Activated T-helper 1 cell treated with anti-CD3 and anti-CD28 coated beads, Interleukin-12 subunit alpha, Interleukin-12 subunit beta, Interleukin-2, Interleukin-4 antibody, amounts not matched to agents 30 ng/mL and 10 ng/mL and 1 ng/mL, durations not matched to agents 14 hours and 24 hours and 36 hours (primary cell): ENCODE measurements at regions of chr10 and their contacts with region 1.

Region 1: GRCh38 chr10:123582084-123582989 is 83.8 kb upstream of the GPR26 start:
- DNase-seq: peak; percentile 46
- H3K4me3 Mint-ChIP-seq: no peak overlapping the region
- H3K27ac Mint-ChIP-seq: no peak overlapping the region
- H3K4me1 Mint-ChIP-seq: no peaks in the 10 kb centered on the region
- H3K27me3 Mint-ChIP-seq: peaks cover 14% of the 10 kb centered on the region

Region 2: DNA sequence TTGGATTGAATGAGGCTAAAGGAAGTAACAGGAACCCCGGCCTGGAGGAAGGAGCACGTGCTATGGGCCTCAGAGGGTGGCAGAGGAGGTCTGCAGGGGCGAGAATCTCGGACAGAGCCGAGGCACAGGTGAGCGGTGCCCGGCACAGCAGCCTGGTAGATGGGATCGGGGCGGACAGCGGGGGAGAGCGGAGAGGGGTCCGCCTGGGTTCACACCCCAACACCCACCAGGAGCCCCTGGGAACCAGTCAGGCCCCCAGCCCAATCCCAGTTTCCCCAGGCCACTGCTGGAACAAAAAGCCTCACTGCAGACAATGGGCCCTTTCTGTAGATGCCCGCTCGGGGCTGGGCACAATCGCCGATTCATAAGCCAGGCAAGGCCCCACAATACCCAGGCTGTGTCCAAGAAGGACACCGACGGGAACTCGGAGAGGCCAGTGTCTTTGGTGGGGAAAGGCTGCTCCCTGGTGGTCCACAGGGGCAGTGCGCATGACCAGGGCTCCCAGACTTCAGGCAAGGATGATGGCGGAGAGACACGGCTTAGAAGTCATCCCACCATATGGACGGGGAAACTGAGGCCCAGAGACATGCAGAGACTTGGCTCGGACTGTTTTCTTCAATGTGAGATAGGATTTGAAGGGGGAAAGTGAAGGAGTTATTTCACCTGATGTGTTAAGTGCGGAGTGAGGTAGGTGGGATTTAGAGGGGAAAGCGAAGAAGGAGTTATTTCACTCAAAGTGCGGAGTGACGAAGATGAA is 23.1 kb before region 1 on chr10:
- intact Hi-C with region 1: no loop called
- DNase-seq: peak; percentile 44
- H3K4me3 Mint-ChIP-seq: no peak overlapping the region
- H3K27ac Mint-ChIP-seq: no peak overlapping the region
- H3K4me1 Mint-ChIP-seq: no peaks in the 10 kb centered on the region
- H3K27me3 Mint-ChIP-seq: peaks cover 6% of the 10 kb centered on the region

Region 3: DNA sequence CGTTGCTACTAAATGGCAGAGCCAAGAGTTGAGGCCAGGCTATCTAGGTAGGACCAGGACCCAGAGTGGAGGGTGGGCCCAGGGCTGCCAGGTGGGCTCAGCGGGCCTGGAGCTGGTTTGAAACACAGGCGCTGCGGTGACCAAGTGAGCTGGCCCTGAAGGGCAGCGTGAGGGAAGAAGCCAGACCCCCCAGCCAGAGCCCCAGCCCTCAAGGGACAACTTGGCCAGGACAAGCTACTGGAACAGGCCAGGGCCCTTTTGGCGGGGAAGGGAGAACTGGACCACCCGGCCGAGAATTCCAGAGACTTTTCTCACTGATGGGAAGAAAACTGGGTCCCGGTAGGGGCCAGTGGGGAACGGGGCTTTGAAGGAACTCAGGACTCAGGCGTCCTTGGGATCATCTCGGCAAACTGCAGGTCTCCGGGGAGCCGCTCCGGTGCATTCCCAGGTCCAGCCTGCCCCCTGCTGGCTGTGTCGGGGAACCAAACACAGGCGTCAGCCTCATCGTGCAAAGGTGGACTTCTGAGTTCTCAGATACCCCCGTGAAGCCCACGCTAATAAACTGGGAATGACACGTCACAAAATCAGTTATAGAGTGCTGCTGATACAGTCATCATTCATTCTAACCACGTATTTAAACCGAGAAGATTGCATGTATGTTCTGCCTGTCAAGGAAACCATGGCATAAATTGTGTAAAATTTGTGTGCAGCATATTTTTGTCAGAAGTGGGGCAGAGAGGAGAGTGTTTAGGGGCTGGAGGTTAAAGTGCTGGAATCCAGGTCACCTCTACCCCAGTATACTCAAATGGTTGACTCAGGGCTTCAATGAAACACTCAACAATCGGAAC is 385.3 kb after region 1 on chr10:
- intact Hi-C with region 1: loop called (anchors 1 kb)
- DNase-seq: peak; percentile 20
- H3K4me3 Mint-ChIP-seq: no peak overlapping the region
- H3K27ac Mint-ChIP-seq: no peak overlapping the region
- H3K4me1 Mint-ChIP-seq: no peaks in the 10 kb centered on the region
- H3K27me3 Mint-ChIP-seq: peaks cover 24% of the 10 kb centered on the region